ENCODE measurements at regions of chr2 and their contacts with region 1.

Region 1: GRCh38 chr2:158006961-158007719 is 94.5 kb upstream of the UPP2 start:
- DNase-seq: no peak
- H3K4me3 Mint-ChIP-seq: no peak overlapping the region
- H3K27ac Mint-ChIP-seq: no peak overlapping the region
- H3K4me1 Mint-ChIP-seq: peaks cover 29% of the 10 kb centered on the region
- H3K27me3 Mint-ChIP-seq: no peaks in the 10 kb centered on the region

Region 2: GRCh38 chr2:157433394-157433793 is 573.7 kb before region 1 on chr2:
- intact Hi-C with region 1: loop called (anchors 5 kb)
- DNase-seq: no peak
- H3K4me3 Mint-ChIP-seq: peak overlapping the region; percentile 84
- H3K27ac Mint-ChIP-seq: peak overlapping the region; percentile 96
- H3K4me1 Mint-ChIP-seq: peaks cover 95% of the 10 kb centered on the region
- H3K27me3 Mint-ChIP-seq: no peaks in the 10 kb centered on the region

Region 3: GRCh38 chr2:157497638-157498314 is 509.4 kb before region 1 on chr2:
- intact Hi-C with region 1: loop called (anchors 1 kb)
- DNase-seq: no peak
- H3K4me3 Mint-ChIP-seq: no peak overlapping the region
- H3K27ac Mint-ChIP-seq: no peak overlapping the region
- H3K4me1 Mint-ChIP-seq: peaks cover 41% of the 10 kb centered on the region
- H3K27me3 Mint-ChIP-seq: no peaks in the 10 kb centered on the region

Region 4: GRCh38 chr2:157628477-157629415 is 378.4 kb before region 1 on chr2 and contains the start of gene ACVR1C:
- intact Hi-C with region 1: loop called (anchors 2 kb)
- DNase-seq: peak; percentile 63
- H3K4me3 Mint-ChIP-seq: peak within 1 kb of the TSS; percentile 88
- H3K27ac Mint-ChIP-seq: peak within 1 kb of the TSS; percentile 55
- H3K4me1 Mint-ChIP-seq: peaks cover 28% of the 10 kb centered on the region
- H3K27me3 Mint-ChIP-seq: peaks cover 15% of the 10 kb centered on the region
- total RNA-seq, gene ACVR1C: 0.59 and 1.1 TPM in 2 replicates

Region 5: DNA sequence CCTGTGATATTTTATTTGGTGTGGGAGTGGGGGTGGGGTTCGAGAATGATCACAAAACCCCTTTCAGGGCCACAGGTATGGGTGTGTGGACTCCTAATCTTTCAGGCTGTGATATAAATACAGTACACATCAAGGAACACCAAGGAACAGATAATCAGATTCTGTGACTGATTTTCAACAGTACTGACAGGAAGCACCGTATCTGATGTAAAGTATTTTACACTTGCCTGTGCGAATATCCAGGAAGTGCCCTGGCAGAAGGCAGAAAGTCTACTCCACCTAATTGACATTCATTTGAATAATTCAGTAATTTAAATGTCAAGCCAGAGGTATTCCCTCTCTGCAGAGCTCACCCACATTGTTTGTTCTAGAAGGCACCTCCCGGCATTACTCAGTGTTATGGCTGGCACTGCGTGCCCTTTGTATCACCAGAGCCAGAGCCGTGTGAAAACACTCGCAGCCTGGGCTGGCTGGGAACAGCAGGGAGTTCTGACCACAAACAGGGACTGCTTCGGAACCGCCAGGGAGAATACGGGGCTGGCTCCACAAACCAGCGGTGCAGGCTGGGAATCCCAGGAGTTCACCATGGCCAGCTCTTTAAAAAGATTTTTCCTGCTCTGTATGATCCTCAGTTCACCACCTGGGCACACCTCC is 222.8 kb before region 1 on chr2:
- intact Hi-C with region 1: loop called (anchors 1 kb)
- DNase-seq: no peak
- H3K4me3 Mint-ChIP-seq: peak overlapping the region; percentile 37
- H3K27ac Mint-ChIP-seq: peak overlapping the region; percentile 32
- H3K4me1 Mint-ChIP-seq: peaks cover 87% of the 10 kb centered on the region
- H3K27me3 Mint-ChIP-seq: no peaks in the 10 kb centered on the region

Region 6: GRCh38 chr2:157882696-157883095 is 124.4 kb before region 1 on chr2:
- intact Hi-C with region 1: no loop called
- DNase-seq: no peak
- H3K4me3 Mint-ChIP-seq: no peak overlapping the region
- H3K27ac Mint-ChIP-seq: no peak overlapping the region
- H3K4me1 Mint-ChIP-seq: peaks cover 16% of the 10 kb centered on the region
- H3K27me3 Mint-ChIP-seq: no peaks in the 10 kb centered on the region

Region 7: GRCh38 chr2:158191076-158191895 is 184.1 kb after region 1 on chr2:
- intact Hi-C with region 1: loop called (anchors 5 kb)
- DNase-seq: peak; percentile 6
- H3K4me3 Mint-ChIP-seq: peak overlapping the region; percentile 50
- H3K27ac Mint-ChIP-seq: peak overlapping the region; percentile 40
- H3K4me1 Mint-ChIP-seq: peaks cover 28% of the 10 kb centered on the region
- H3K27me3 Mint-ChIP-seq: peaks cover 24% of the 10 kb centered on the region